ENCODE measurements at regions of chr6 and their contacts with region 1.

Region 1: GRCh38 chr6:89161326-89162046 is 15.6 kb downstream of the PM20D2 start:
- DNase-seq: no peak
- ATAC-seq: no peak
- H3K4me3 ChIP-seq: no peak overlapping the region
- H3K27ac ChIP-seq: no peak overlapping the region
- H3K4me1 ChIP-seq: no peaks in the 10 kb centered on the region
- H3K27me3 ChIP-seq: no peaks in the 10 kb centered on the region
- CTCF ChIP-seq: no peak
- EP300 ChIP-seq: no peak
- POLR2A ChIP-seq: no peak
- RAD21 ChIP-seq: 0 out of 2 replicates have a peak, but pooled peaks have one; percentile 11

Region 2: GRCh38 chr6:89145787-89146646 is 15.5 kb before region 1 on chr6 and contains the start of gene PM20D2:
- CTCF ChIA-PET with region 1: interaction called, 5 read pairs
- POLR2A ChIA-PET with region 1: interaction called, 10 read pairs
- RAD21 ChIA-PET with region 1: interaction called, 4 read pairs
- SMC1A ChIA-PET with region 1: interaction called, 3 read pairs
- in situ Hi-C with region 1: no loop called
- intact Hi-C with region 1: no loop called
- DNase-seq: no peak
- ATAC-seq: peak; percentile 84
- H3K4me3 ChIP-seq: peak within 1 kb of the TSS; percentile 71
- H3K27ac ChIP-seq: peak within 1 kb of the TSS; percentile 75
- H3K4me1 ChIP-seq: peaks cover 16% of the 10 kb centered on the region
- H3K27me3 ChIP-seq: no peaks in the 10 kb centered on the region
- CTCF ChIP-seq: no peak
- EP300 ChIP-seq: no peak
- POLR2A ChIP-seq: peak; percentile 86
- RAD21 ChIP-seq: no peak
- polyA plus RNA-seq, gene PM20D2: 7.8 to 8.3 TPM